Activated CD4-positive, alpha-beta memory T cell treated with anti-CD3 and anti-CD28 coated beads for 36 hours (primary cell): ENCODE measurements at regions of chr10 and their contacts with region 1.

Region 1: GRCh38 chr10:67815571-67816059 is 22.4 kb downstream of the DNAJC12 start:
- DNase-seq: no peak
- H3K4me3 Mint-ChIP-seq: no peak overlapping the region
- H3K27ac Mint-ChIP-seq: peak overlapping the region; percentile 76
- H3K4me1 Mint-ChIP-seq: peaks cover 28% of the 10 kb centered on the region
- H3K27me3 Mint-ChIP-seq: peaks cover 3% of the 10 kb centered on the region

Region 2: DNA sequence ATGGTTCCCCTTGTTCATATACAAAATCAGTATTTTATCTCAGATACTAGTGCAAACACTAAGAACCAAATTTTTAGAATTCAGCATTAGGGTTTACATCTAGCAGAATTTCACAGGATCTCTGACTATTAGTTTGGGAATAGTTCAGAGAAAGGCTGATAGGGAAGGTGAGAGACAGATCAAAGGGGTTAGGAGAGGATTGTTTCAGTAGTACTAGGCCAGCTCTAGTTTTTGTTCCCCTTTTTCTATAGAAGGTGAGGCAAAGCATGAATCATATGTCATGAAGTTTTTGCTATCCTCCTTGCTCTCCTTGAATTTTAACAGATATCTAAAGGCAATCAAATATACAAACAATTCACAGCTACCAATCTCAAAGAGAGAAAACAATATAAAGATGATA is 93.5 kb before region 1 on chr10:
- CTCF ChIA-PET with region 1: no interaction called
- POLR2A ChIA-PET with region 1: no interaction called
- intact Hi-C with region 1: no loop called
- DNase-seq: no peak
- H3K4me3 Mint-ChIP-seq: no peak overlapping the region
- H3K27ac Mint-ChIP-seq: no peak overlapping the region
- H3K4me1 Mint-ChIP-seq: no peaks in the 10 kb centered on the region
- H3K27me3 Mint-ChIP-seq: no peaks in the 10 kb centered on the region

Region 3: DNA sequence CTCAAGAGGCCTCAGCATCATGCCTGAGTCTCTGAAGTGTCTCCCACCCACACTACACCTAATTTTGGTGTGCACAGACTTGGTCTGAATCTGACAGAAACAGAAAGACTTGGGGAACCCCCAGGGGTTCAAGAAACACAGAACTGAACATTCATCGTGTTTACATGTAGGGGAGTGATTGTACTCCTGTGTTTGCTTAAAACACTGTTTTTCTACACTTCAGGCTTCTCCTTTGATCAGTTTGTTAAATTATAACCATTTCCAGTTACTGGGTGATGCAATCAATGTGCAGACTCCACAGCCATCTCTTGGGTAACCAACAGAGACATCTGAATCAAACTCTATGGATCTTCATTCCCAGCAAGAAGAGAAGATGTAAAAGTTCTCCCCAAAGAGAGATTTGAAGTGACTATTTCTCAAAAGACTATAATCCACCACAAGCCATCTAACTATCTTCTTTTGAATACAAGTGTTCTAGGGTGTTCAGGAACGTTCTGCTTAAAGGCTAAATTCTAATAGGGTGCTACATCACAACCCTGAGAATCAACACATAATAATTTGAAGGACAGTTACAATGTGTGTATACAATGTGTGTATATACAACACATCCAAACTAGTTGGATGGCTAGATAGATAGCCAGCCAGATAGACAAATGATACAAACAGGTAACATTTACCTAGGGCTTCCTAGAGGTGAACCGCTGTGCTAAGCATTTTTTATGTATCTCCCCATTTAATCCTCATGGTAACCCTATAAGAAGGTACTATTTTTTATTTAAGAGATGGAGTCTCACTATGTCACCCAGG is 11.8 kb before region 1 on chr10:
- CTCF ChIA-PET with region 1: interaction called, 4 read pairs
- POLR2A ChIA-PET with region 1: no interaction called
- intact Hi-C with region 1: loop called (anchors 1 kb)
- DNase-seq: peak; percentile 56
- H3K4me3 Mint-ChIP-seq: no peak overlapping the region
- H3K27ac Mint-ChIP-seq: peak overlapping the region; percentile 92
- H3K4me1 Mint-ChIP-seq: peaks cover 26% of the 10 kb centered on the region
- H3K27me3 Mint-ChIP-seq: peaks cover 2% of the 10 kb centered on the region

Region 4: GRCh38 chr10:68105820-68106219 is 290.2 kb after region 1 on chr10:
- CTCF ChIA-PET with region 1: no interaction called
- POLR2A ChIA-PET with region 1: no interaction called
- intact Hi-C with region 1: no loop called
- DNase-seq: no peak
- H3K4me3 Mint-ChIP-seq: no peak overlapping the region
- H3K27ac Mint-ChIP-seq: no peak overlapping the region
- H3K4me1 Mint-ChIP-seq: no peaks in the 10 kb centered on the region
- H3K27me3 Mint-ChIP-seq: peaks cover 4% of the 10 kb centered on the region